ENCODE measurements at regions of chr19 and their contacts with region 1.

Region 1: GRCh38 chr19:46392243-46392801 is 21.0 kb downstream of the CCDC8 start:
- DNase-seq: peak; percentile 74
- H3K4me3 ChIP-seq: no peak overlapping the region
- H3K27ac ChIP-seq: peak overlapping the region; percentile 66
- H3K4me1 ChIP-seq: peaks cover 31% of the 10 kb centered on the region
- H3K27me3 ChIP-seq: no peaks in the 10 kb centered on the region
- CTCF ChIP-seq: no peak

Region 2: GRCh38 chr19:45657520-45658167 is 734.7 kb before region 1 on chr19:
- CTCF ChIA-PET with region 1: interaction called, 11 read pairs
- POLR2A ChIA-PET with region 1: no interaction called
- intact Hi-C with region 1: no loop called
- DNase-seq: no peak
- H3K4me3 ChIP-seq: no peak overlapping the region
- H3K27ac ChIP-seq: no peak overlapping the region
- H3K4me1 ChIP-seq: peaks cover 5% of the 10 kb centered on the region
- H3K27me3 ChIP-seq: no peaks in the 10 kb centered on the region
- CTCF ChIP-seq: no peak

Region 3: DNA sequence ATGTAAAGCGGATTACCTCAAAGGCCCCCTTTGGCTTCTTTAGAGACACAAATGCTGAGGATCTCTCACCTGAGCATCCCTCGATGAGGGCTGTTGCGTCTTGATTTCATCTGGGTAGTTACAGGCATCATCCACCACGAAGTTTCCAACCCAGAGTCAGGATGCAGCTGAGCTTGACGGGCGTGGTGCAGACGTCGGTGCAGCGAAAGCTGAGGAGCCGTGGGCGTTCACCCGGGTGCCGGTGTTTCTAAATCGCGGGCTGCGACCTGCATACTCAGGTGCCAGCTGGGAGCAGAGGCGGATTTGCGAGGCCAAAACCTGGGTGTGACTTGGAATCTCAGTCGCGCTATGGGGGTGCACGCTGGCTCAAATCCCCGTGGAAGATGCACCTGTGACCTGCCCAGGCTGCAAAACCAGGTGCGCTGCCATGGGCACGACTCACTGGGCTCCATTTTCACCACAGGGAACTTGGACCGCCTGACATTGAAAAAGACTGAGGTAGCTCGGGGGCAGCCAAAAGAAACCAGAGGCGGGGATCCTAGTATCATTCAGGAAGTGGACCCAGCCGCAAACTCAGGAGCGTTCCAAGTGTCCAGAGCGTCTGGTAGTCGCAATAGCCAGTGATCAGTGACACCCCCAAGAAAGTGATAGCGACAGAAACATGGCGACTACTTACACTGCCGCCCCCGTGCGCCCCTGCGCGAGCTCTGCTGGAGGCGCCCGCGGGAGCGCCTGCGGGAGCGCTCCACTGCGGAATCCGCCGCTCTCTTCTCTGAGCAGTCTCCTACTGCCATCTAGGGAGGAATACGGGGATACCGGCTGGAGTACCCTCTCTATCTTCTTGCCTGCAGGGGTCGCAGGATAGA is 315.1 kb before region 1 on chr19:
- CTCF ChIA-PET with region 1: interaction called, 21 read pairs
- POLR2A ChIA-PET with region 1: no interaction called
- intact Hi-C with region 1: loop called (anchors 10 kb)
- DNase-seq: peak; percentile 94
- H3K4me3 ChIP-seq: peak overlapping the region; percentile 57
- H3K27ac ChIP-seq: no peak overlapping the region
- H3K4me1 ChIP-seq: peaks cover 22% of the 10 kb centered on the region
- H3K27me3 ChIP-seq: peaks cover 39% of the 10 kb centered on the region
- CTCF ChIP-seq: peak; percentile 99

Region 4: GRCh38 chr19:46478356-46478986 is 86.1 kb after region 1 on chr19:
- CTCF ChIA-PET with region 1: interaction called, 13 read pairs
- POLR2A ChIA-PET with region 1: no interaction called
- intact Hi-C with region 1: no loop called
- DNase-seq: peak; percentile 48
- H3K4me3 ChIP-seq: no peak overlapping the region
- H3K27ac ChIP-seq: no peak overlapping the region
- H3K4me1 ChIP-seq: peaks cover 4% of the 10 kb centered on the region
- H3K27me3 ChIP-seq: no peaks in the 10 kb centered on the region
- CTCF ChIP-seq: no peak

Region 5: DNA sequence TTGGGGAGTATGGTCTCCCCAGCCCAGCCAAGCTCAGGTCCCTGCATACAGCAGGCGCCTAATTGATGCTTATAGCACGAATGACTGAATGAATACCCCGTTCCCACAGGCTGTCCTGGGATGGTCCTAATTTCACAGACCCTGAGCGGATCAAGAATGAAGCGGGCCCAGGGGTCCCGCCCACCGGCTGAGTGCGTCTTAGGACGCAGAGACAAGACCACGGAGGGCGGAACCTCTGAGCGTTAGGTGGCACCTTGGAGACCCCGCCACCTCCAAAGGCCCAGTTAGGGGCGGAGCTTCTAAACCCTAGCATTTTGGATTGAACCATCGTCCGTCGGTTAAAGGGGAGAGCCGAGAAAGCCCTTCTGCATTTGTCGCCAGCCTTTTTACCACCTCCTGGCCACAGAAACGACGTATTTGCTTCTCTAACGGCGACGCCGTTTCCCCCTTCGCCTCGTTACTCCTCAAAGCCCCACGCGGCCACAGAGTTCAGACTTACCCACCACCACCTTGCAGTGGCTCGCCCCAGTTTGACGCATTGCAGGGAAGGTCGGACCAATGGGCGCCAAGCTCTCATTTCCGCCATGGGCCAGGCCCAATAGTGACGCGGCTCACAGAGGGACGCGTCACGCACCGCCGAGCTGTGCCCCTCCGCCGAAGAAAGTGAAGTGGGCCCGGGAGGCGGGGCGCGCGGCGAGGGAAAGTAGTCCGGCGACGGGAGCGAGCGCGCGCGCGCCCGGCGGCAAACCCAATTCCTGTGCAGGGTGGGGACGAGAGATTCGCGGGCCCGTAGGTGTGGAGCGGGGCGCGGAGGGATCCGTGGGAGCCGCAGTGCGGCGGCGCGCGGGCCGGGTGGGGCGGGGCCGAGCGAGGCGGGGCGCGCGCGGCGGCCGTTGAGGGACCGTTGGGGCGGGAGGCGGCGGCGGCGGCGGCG is 208.3 kb after region 1 on chr19:
- CTCF ChIA-PET with region 1: interaction called, 10 read pairs
- POLR2A ChIA-PET with region 1: no interaction called
- intact Hi-C with region 1: no loop called
- DNase-seq: peak; percentile 98
- H3K4me3 ChIP-seq: peak overlapping the region; percentile 100
- H3K27ac ChIP-seq: peak overlapping the region; percentile 100
- H3K4me1 ChIP-seq: peaks cover 10% of the 10 kb centered on the region
- H3K27me3 ChIP-seq: no peaks in the 10 kb centered on the region
- CTCF ChIP-seq: no peak